ENCODE measurements at regions of chr15 and their contacts with region 1.

Region 1: DNA sequence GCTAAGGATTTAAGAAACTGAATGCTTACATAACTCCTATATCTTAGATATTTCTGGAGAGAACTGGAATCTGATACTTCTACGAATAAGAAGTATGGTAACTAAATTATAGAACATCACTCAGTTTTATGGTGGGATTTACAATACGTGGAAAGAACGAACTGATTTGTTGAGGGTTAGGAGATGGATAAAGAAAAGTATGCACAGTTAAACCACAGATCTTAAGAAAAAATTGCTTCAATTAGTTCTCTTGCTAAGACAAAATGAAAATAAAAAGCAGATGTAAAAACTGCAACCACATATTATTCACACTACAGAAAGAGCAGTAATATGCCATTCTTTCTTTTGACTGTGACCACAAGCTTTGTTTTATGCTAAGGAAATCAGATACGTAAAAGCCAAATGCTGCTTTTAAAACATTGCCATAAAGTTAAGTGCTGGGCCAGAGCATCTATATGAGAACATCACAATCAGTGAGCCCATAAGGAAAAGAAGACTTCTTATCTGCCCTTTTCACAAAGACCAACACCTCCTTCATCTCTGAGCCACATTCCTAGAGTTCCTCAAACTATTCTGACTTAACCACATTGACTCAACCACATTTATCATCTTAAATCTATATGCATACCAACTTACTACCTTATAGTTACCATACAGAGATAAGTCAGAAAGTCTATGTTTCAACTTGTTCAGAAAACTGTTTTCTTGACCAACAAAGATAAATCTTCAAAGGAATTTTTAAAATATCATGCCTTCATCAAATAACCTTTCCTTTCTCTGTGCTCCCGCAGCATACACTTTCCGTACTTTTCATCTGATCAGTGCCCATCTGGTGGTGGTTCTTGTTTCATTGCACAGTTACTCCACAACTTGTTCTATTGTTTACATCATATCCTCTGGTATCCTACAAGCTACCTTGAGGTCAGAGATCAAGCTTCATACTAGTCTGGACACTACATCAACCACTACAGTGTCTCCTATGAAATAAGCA is 61.7 kb downstream of the FSIP1 start:
- DNase-seq: peak; percentile 83 to 87
- H3K4me3 ChIP-seq: no peak overlapping the region
- H3K4me3 Mint-ChIP-seq: no peak overlapping the region
- H3K27ac Mint-ChIP-seq: peak overlapping the region; percentile 94
- H3K4me1 ChIP-seq: peaks cover 61% of the 10 kb centered on the region
- H3K4me1 Mint-ChIP-seq: peaks cover 39% of the 10 kb centered on the region
- H3K27me3 ChIP-seq: no peaks in the 10 kb centered on the region
- H3K27me3 Mint-ChIP-seq: no peaks in the 10 kb centered on the region
- CTCF ChIP-seq: peak in 1 of 2 experiments; percentile 16

Region 2: DNA sequence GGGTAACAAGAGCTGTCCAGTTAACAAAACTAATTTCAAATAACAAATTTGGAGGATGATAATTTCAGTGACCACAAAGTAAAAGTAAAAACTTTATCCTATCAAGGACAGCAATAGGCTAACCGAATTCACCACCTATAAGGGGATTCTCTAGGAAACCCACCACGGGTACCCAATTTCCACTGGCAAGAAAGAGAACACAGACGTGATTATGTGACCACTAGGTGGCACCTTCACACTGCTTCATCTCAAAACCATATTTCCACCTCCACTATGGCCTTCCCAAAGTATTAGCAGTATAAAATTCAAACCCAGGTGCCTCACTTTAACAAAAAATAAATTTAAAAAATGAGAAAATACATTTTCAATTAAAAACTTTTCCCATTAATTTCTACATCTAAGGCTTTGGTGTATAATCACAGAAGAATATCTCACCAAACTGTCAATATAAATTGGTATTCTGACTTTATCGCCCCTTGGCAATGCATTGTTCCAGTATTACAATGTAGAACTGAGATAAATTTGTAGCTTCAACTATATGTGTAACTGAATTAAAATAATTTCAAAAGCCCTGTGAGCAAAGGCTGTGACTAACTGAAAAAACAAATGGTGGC is 34.8 kb before region 1 on chr15:
- CTCF ChIA-PET with region 1: interaction called, 4 read pairs
- POLR2A ChIA-PET with region 1: no interaction called
- intact Hi-C with region 1: loop called (anchors 1 kb)
- DNase-seq: peak; percentile 47 to 65
- H3K4me3 ChIP-seq: no peak overlapping the region
- H3K4me3 Mint-ChIP-seq: no peak overlapping the region
- H3K27ac Mint-ChIP-seq: no peak overlapping the region
- H3K4me1 ChIP-seq: peaks cover 45% of the 10 kb centered on the region
- H3K4me1 Mint-ChIP-seq: peaks cover 38% of the 10 kb centered on the region
- H3K27me3 ChIP-seq: no peaks in the 10 kb centered on the region
- H3K27me3 Mint-ChIP-seq: no peaks in the 10 kb centered on the region
- CTCF ChIP-seq: peak; percentile 52 to 78

Region 3: DNA sequence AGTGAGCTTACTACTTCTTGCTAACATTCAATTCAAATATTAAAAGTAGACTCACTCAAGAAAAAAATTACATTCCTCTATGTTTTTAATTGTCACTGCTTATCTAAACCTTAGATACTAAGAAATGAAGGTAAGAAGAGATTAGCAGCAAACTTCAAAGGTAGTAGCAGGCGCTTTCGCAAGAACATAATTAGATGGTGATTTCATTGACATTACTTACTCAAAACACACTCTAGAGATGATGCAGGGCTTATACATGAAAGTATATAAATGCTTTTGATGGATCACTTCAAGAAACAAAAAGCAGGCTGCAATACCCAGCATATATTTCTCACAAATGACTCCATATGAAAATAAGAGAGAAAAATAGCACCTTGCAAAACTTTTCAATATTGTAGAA is 25.1 kb before region 1 on chr15:
- CTCF ChIA-PET with region 1: interaction called, 5 read pairs
- POLR2A ChIA-PET with region 1: no interaction called
- intact Hi-C with region 1: loop called (anchors 1 kb)
- DNase-seq: peak; percentile 37 to 51
- H3K4me3 ChIP-seq: no peak overlapping the region
- H3K4me3 Mint-ChIP-seq: no peak overlapping the region
- H3K27ac Mint-ChIP-seq: no peak overlapping the region
- H3K4me1 ChIP-seq: peaks cover 91% of the 10 kb centered on the region
- H3K4me1 Mint-ChIP-seq: peaks cover 68% of the 10 kb centered on the region
- H3K27me3 ChIP-seq: no peaks in the 10 kb centered on the region
- H3K27me3 Mint-ChIP-seq: no peaks in the 10 kb centered on the region
- CTCF ChIP-seq: no peak

Region 4: DNA sequence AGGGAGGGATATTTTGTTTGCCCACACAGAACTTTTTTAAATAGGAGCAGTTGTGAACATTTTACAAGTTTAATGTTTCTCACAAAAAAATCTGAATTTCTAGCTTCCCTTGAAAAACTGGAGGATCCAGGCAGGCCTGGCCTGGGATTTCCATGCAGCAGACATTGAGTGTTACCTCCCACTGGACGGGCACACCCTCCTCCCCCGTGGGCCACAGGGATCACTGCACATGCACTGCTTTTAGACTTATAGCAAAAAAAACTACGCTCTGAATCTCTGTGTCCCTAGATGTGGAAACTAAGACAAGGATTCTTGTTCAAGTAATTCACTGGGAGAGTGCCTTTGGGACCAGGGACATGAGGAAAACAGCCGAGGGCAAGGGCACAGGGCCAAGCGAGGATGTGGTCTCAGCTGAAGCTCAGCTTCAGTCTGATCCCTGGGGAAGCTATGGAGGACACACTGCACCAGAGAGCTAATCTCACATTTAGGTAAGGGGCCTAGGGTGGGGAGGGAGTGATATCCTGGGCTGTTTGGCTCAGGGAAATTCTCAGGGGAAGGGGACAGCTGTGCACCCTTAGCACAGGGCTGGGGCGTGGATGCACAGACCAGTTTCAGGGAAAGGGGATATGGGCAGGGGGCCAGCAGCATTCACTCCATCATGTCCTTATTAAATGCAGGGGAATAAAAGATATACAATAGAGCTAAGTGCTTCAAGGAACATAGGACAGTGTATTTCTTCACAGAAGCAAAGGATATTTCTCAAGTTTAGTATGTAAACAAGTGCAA is 15.7 kb after region 1 on chr15:
- CTCF ChIA-PET with region 1: no interaction called
- POLR2A ChIA-PET with region 1: interaction called, 3 read pairs
- intact Hi-C with region 1: loop called (anchors 2 kb)
- DNase-seq: no peak
- H3K4me3 ChIP-seq: no peak overlapping the region
- H3K4me3 Mint-ChIP-seq: peak overlapping the region; percentile 10
- H3K27ac Mint-ChIP-seq: peak overlapping the region; percentile 89
- H3K4me1 ChIP-seq: peaks cover 53% of the 10 kb centered on the region
- H3K4me1 Mint-ChIP-seq: peaks cover 31% of the 10 kb centered on the region
- H3K27me3 ChIP-seq: no peaks in the 10 kb centered on the region
- H3K27me3 Mint-ChIP-seq: no peaks in the 10 kb centered on the region
- CTCF ChIP-seq: no peak